H1 (cell line): ENCODE measurements at regions of chr10 and their contacts with region 1.

Region 1: GRCh38 chr10:72557362-72557761 is 68.5 kb downstream of the MICU1 start:
- DNase-seq: no peak
- H3K4me3 ChIP-seq: no peak overlapping the region
- H3K27ac ChIP-seq: no peak overlapping the region
- H3K4me1 ChIP-seq: no peaks in the 10 kb centered on the region
- H3K27me3 ChIP-seq: no peaks in the 10 kb centered on the region
- CTCF ChIP-seq: no peak
- EP300 ChIP-seq: no peak
- POLR2A ChIP-seq: no peak
- RAD21 ChIP-seq: no peak

Region 2: GRCh38 chr10:72567884-72568640 is 10.7 kb after region 1 on chr10:
- CTCF ChIA-PET with region 1: interaction called, 14 read pairs
- POLR2A ChIA-PET with region 1: no interaction called
- DNase-seq: no peak
- H3K4me3 ChIP-seq: no peak overlapping the region
- H3K27ac ChIP-seq: no peak overlapping the region
- H3K4me1 ChIP-seq: no peaks in the 10 kb centered on the region
- H3K27me3 ChIP-seq: no peaks in the 10 kb centered on the region
- CTCF ChIP-seq: peak in 2 of 3 experiments; percentile 42 to 49; a peak in 3 of 4 replicates
- EP300 ChIP-seq: no peak
- POLR2A ChIP-seq: no peak
- RAD21 ChIP-seq: peak; percentile 55 to 65